ENCODE measurements at regions of chr1 and their contacts with region 1.

Region 1: DNA sequence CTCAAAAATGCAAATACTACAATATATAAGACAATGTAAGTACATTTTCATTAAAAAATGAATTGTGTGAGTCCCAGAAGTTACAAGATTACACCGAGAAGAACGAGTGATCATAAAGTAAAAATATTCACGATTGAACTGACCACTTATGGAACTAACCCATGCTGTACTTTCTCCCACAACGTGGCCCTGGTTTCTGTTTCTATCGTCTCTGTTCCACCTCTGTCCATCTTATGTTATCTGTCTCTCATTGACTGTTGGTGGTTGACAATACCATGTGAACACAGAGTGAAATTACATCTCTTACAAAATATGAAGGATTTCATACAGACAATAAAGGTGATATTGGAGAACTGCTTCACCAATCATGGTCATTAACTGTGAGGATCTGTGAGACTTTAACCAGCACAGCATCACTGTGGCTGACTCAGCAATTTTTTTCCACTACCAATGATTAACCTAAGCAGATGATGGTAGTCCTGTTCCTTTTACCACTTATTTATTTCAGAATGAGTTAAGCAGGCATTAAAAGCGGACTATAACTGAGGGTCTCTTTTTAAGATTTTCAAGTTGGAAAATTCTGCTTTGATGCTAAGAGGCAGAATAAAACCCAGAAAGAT is 165.1 kb downstream of the TGFB2 start:
- DNase-seq: no peak
- H3K4me3 ChIP-seq: no peak overlapping the region
- H3K27ac ChIP-seq: no peak overlapping the region
- H3K4me1 ChIP-seq: no peaks in the 10 kb centered on the region
- H3K27me3 ChIP-seq: no peaks in the 10 kb centered on the region
- CTCF ChIP-seq: no peak
- EP300 ChIP-seq: no peak
- POLR2A ChIP-seq: no peak

Region 2: GRCh38 chr1:218439541-218440295 is 70.5 kb before region 1 on chr1:
- in situ Hi-C with region 1: no loop called
- intact Hi-C with region 1: no loop called
- DNase-seq: no peak
- H3K4me3 ChIP-seq: no peak overlapping the region
- H3K27ac ChIP-seq: peak overlapping the region in 1 of 4 donors; percentile 4
- H3K4me1 ChIP-seq: no peaks in the 10 kb centered on the region
- H3K27me3 ChIP-seq: no peaks in the 10 kb centered on the region
- CTCF ChIP-seq: no peak
- EP300 ChIP-seq: no peak
- POLR2A ChIP-seq: no peak

Region 3: GRCh38 chr1:218459878-218460711 is 50.2 kb before region 1 on chr1:
- in situ Hi-C with region 1: loop called in 1 of 4 experiments (anchors 10 kb)
- intact Hi-C with region 1: no loop called
- DNase-seq: no peak
- H3K4me3 ChIP-seq: no peak overlapping the region
- H3K27ac ChIP-seq: peak overlapping the region; percentile 28 to 77 (median 55)
- H3K4me1 ChIP-seq: peaks cover 0 to 16% (median 9%) of the 10 kb centered on the region in 4 donors
- H3K27me3 ChIP-seq: no peaks in the 10 kb centered on the region
- CTCF ChIP-seq: no peak
- EP300 ChIP-seq: no peak
- POLR2A ChIP-seq: no peak

Measured in transverse colon (tissue), 4 donors.